Endothelial cell of umbilical vein (primary cell): ENCODE measurements at regions of chr6 and their contacts with region 1.

Region 1: DNA sequence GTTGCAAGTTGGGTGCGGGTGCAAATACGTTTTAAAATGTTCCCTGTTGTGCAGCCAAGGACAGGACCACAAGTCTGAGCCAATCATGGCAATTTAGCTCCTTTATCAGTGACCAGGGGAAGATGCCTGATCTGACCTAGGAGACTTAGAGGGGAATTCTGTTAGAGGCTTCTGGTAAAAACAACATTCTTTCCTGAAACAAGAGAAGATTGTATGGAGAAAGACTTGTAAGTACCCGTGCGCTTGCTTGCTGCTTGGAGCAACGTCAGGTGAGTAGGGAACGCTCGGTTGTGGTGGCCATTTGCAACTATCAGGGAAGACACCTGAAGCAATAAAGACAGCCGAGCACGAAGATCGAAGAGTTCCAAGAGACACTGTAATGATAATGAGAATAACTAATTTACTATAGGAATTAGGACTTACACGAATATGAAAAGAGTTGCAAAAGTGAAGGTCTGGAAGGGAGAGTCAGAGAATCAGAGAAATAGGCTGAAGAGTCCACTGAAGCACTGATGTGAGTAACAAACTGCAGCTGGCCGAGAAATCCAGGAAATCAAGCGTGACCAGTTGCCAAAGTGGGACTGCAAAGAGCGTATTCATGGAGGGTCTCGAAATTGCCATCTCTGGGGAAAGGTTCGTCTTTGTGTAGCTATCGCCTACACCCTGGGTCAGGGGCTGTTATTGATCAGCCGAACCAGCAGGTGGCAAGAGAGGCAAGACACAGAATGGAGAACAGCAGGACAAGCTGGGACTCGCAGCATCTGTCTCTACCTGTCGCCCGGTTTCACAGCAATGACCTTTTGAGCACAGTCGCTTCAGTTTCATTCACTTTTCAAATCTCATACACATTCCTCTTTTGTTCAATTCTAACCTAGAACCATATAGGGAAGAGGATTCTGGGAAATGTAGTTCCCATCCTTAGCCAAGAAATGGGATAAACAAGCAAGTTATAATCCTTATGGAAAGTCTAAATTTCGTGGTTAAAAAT is 26.1 kb downstream of the LOC128125822 start:
- DNase-seq: peak; percentile 73
- H3K4me3 ChIP-seq: peak overlapping the region; percentile 12 to 63 (median 42)
- H3K27ac ChIP-seq: no peak overlapping the region
- H3K4me1 ChIP-seq: peaks cover 2% of the 10 kb centered on the region
- H3K27me3 ChIP-seq: peaks cover 0 to 2% of the 10 kb centered on the region in 2 experiments
- CTCF ChIP-seq: peak; percentile 79 to 83
- POLR2A ChIP-seq: no peak

Region 2: GRCh38 chr6:62528894-62529526 is 1069.3 kb before region 1 on chr6:
- CTCF ChIA-PET with region 1: no interaction called
- POLR2A ChIA-PET with region 1: no interaction called
- dilution Hi-C with region 1: no loop called
- intact Hi-C with region 1: no loop called
- DNase-seq: no peak
- H3K4me3 ChIP-seq: no peak overlapping the region
- H3K27ac ChIP-seq: no peak overlapping the region
- H3K4me1 ChIP-seq: no peaks in the 10 kb centered on the region
- H3K27me3 ChIP-seq: no peaks in the 10 kb centered on the region
- CTCF ChIP-seq: no peak
- POLR2A ChIP-seq: no peak

Region 3: GRCh38 chr6:63352587-63353285 is 245.6 kb before region 1 on chr6:
- CTCF ChIA-PET with region 1: interaction called, 8 read pairs
- POLR2A ChIA-PET with region 1: no interaction called
- dilution Hi-C with region 1: no loop called
- intact Hi-C with region 1: loop called (anchors 1 kb)
- DNase-seq: peak; percentile 27
- H3K4me3 ChIP-seq: no peak overlapping the region
- H3K27ac ChIP-seq: no peak overlapping the region
- H3K4me1 ChIP-seq: peaks cover 26% of the 10 kb centered on the region
- H3K27me3 ChIP-seq: no peaks in the 10 kb centered on the region
- CTCF ChIP-seq: peak in 1 of 2 donors; percentile 17
- POLR2A ChIP-seq: no peak

Region 4: DNA sequence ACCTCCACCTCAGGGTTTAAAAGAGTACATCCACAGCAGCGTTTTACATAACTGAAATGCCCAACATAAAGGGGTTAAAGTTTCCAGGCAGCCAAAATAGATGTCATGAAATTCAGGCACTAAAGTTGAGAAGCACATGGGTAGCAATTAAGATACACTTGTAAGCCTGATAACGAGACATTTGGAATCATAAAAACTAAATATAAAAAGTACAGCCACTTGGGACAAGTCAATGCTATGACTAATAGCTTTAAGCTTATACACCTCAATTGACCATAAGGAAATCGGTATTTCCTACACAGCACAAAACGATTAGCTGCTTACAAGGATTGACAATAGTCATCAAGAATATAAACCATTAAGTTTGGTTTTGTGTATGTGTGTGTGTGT is 14.2 kb before region 1 on chr6:
- CTCF ChIA-PET with region 1: interaction called, 22 read pairs
- POLR2A ChIA-PET with region 1: no interaction called
- dilution Hi-C with region 1: no loop called
- intact Hi-C with region 1: no loop called
- DNase-seq: no peak
- H3K4me3 ChIP-seq: no peak overlapping the region
- H3K27ac ChIP-seq: no peak overlapping the region
- H3K4me1 ChIP-seq: no peaks in the 10 kb centered on the region
- H3K27me3 ChIP-seq: no peaks in the 10 kb centered on the region
- CTCF ChIP-seq: no peak
- POLR2A ChIP-seq: peak; percentile 38

Region 5: DNA sequence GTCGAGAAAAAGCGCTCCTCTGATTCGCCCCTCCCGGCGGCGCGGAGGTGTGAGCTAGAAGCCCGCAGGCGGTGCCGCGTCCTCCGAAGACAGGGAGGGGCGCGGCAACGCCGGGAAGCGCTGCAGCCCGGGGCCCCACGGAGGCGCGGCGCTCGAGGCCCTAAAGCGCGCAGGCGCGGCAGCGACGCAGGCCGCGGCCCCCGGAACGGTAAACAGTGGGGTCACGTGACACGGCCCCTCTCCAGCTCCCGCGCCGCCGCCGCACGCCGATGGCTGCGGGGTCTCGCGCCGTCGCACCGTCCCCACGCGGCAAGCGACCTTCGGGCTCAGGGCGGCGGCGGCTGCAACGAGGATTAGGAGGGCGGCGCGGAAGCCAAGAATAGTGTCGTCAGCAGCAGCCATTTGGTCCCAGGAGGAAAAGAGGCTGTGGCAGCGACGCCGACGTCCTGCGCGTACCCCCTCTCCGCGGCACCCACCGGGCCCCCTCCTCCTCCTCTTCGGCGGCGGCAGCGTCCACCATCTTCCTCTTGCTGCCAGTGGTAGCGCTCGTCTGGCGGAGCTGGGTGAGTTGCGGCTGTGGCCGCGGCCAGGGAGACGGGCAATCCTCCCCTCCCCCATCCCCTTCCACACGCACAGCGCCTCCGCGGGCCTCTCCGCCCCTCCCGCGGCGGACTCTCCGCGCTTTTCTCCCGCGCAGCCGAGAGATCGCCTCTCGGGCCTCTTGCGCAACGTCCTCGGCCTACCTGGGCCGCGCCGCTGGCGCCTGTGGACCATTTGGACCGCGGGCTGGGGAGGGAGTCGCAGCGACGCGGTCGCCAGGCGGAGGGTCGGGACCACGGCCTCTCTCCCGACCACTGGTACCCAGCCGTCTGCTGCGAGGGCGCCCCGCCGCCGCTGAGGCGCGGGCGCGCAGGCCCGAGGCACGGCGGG is 37.5 kb after region 1 on chr6 and contains the start of gene PHF3:
- CTCF ChIA-PET with region 1: interaction called, 42 read pairs
- POLR2A ChIA-PET with region 1: no interaction called
- dilution Hi-C with region 1: no loop called
- intact Hi-C with region 1: loop called (anchors 2 kb)
- DNase-seq: peak; percentile 87
- H3K4me3 ChIP-seq: peak within 1 kb of the TSS; percentile 75 to 96 (median 92)
- H3K27ac ChIP-seq: peak within 1 kb of the TSS; percentile 83
- H3K4me1 ChIP-seq: peaks cover 14% of the 10 kb centered on the region
- H3K27me3 ChIP-seq: peaks cover 6 to 12% of the 10 kb centered on the region in 2 experiments
- CTCF ChIP-seq: peak in 1 of 2 donors; percentile 3
- POLR2A ChIP-seq: peak; percentile 60
- total RNA-seq, gene PHF3: 29.6 and 29.9 TPM in 2 replicates

Region 6: GRCh38 chr6:63689421-63689820 is 91.1 kb after region 1 on chr6:
- CTCF ChIA-PET with region 1: interaction called, 10 read pairs
- POLR2A ChIA-PET with region 1: no interaction called
- dilution Hi-C with region 1: no loop called
- intact Hi-C with region 1: no loop called
- DNase-seq: peak; percentile 5
- H3K4me3 ChIP-seq: no peak overlapping the region
- H3K27ac ChIP-seq: no peak overlapping the region
- H3K4me1 ChIP-seq: no peaks in the 10 kb centered on the region
- H3K27me3 ChIP-seq: no peaks in the 10 kb centered on the region
- CTCF ChIP-seq: no peak
- POLR2A ChIP-seq: no peak